ENCODE measurements at regions of chr12 and their contacts with region 1.

Region 1: DNA sequence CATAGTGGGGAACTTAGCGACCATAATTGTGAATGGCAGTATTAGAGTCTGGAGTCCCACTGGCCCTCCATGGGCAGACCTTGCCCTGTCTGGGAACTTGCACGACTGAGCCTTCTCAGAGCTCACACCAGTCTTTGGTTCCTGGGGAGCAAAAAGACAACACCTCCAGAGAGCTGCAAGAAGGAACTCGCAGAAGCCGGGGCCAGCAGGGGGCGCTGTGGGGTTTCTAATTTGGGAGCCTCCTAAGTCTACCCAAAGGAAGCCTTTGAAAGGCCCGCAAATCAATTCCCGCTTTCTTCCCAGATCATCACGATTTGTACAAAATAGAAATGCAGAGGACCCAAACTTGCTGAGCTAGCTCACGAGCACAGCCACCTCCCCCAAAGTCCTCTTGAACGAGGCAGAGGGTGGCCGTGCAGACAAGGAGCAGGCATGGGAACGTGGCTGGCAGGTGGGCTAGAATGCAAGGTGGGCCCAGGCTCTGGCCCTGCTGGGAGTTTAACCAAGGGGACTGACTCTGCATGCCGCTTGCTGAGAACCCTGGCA is 46.3 kb upstream of the FBXO21 start:
- DNase-seq: peak; percentile 85
- H3K4me3 ChIP-seq: no peak overlapping the region
- H3K27ac ChIP-seq: no peak overlapping the region
- H3K4me1 ChIP-seq: no peaks in the 10 kb centered on the region
- H3K27me3 ChIP-seq: no peaks in the 10 kb centered on the region
- CTCF ChIP-seq: peak; percentile 68

Region 2: GRCh38 chr12:117367011-117367638 is 130.6 kb after region 1 on chr12:
- intact Hi-C with region 1: loop called (anchors 10 kb)
- DNase-seq: peak; percentile 74
- H3K4me3 ChIP-seq: no peak overlapping the region
- H3K27ac ChIP-seq: no peak overlapping the region
- H3K4me1 ChIP-seq: no peaks in the 10 kb centered on the region
- H3K27me3 ChIP-seq: peaks cover 2% of the 10 kb centered on the region
- CTCF ChIP-seq: peak; percentile 84

Region 3: GRCh38 chr12:117587631-117588287 is 351.2 kb after region 1 on chr12:
- intact Hi-C with region 1: loop called (anchors 10 kb)
- DNase-seq: peak; percentile 56
- H3K4me3 ChIP-seq: no peak overlapping the region
- H3K27ac ChIP-seq: no peak overlapping the region
- H3K4me1 ChIP-seq: no peaks in the 10 kb centered on the region
- H3K27me3 ChIP-seq: no peaks in the 10 kb centered on the region
- CTCF ChIP-seq: peak; percentile 83

Measured in colonic mucosa (tissue), 4 donors.